ENCODE measurements at regions of chr2 and their contacts with region 1.

Region 1: GRCh38 chr2:227106845-227107759 is 56.9 kb downstream of the COL4A4 start:
- DNase-seq: peak; percentile 46
- ATAC-seq: no peak
- H3K4me3 ChIP-seq: no peak overlapping the region
- H3K4me3 Mint-ChIP-seq: no peak overlapping the region
- H3K27ac ChIP-seq: no peak overlapping the region
- H3K27ac Mint-ChIP-seq: no peak overlapping the region
- H3K4me1 ChIP-seq: no peaks in the 10 kb centered on the region
- H3K4me1 Mint-ChIP-seq: no peaks in the 10 kb centered on the region
- H3K27me3 ChIP-seq: no peaks in the 10 kb centered on the region
- H3K27me3 Mint-ChIP-seq: no peaks in the 10 kb centered on the region
- CTCF ChIP-seq: peak; percentile 65

Region 2: DNA sequence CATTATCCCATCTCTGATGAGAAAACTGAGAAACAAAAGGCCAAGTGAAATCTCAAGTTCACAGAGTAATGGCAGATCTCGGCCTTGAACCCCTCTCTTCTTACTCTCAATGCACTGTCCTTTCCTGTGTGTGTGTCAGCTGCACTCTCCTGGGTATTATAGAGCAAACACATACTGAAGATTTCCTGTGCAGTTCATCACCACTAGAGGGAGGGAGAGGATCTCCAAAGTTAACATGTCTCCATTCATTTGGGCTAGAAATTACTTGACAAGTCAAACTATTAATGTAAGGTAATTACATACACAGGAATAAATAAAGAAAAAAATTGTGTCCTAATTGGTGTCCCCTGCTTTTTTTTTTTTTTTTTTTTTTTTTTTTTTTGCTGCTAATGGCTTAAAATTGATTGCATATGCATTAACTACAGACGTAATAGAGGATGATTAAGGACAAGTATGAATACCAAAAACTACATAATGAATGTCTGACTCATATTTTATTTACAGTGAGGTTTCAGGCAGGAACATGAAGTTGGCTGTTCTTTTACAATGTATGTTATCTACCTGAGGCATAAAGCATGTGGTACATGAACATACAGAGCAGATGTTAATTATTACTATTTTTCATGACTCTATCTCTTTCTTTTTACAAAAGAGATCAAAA is 1438.4 kb before region 1 on chr2:
- CTCF ChIA-PET with region 1: interaction called, 5 read pairs
- POLR2A ChIA-PET with region 1: no interaction called
- intact Hi-C with region 1: loop called (anchors 1 kb)
- DNase-seq: peak; percentile 67
- ATAC-seq: peak; percentile 60
- H3K4me3 ChIP-seq: no peak overlapping the region
- H3K4me3 Mint-ChIP-seq: no peak overlapping the region
- H3K27ac ChIP-seq: no peak overlapping the region
- H3K27ac Mint-ChIP-seq: no peak overlapping the region
- H3K4me1 ChIP-seq: no peaks in the 10 kb centered on the region
- H3K4me1 Mint-ChIP-seq: no peaks in the 10 kb centered on the region
- H3K27me3 ChIP-seq: no peaks in the 10 kb centered on the region
- H3K27me3 Mint-ChIP-seq: peaks cover 3% of the 10 kb centered on the region
- CTCF ChIP-seq: peak; percentile 84

Region 3: DNA sequence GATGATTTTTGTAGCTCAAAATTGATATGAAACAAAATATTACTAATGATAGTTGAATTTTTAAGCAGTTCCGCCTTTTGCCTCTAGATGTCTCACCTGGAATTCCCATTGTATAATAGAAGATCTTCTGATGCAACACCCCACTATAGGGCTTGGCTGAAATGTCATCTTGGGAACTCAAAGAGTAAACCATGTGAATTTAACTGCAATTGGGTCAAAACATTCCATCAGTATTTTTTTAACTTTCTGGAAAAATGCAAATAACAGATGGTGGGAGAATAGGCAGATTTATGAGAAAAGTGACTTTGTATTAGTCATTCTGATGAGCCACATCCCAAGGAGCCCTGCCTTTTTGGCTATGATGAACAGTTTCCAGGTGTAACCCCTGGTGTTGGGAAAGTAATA is 1217.7 kb before region 1 on chr2:
- CTCF ChIA-PET with region 1: no interaction called
- POLR2A ChIA-PET with region 1: no interaction called
- intact Hi-C with region 1: loop called (anchors 2 kb)
- DNase-seq: peak; percentile 40
- ATAC-seq: no peak
- H3K4me3 ChIP-seq: no peak overlapping the region
- H3K4me3 Mint-ChIP-seq: no peak overlapping the region
- H3K27ac ChIP-seq: no peak overlapping the region
- H3K27ac Mint-ChIP-seq: no peak overlapping the region
- H3K4me1 ChIP-seq: no peaks in the 10 kb centered on the region
- H3K4me1 Mint-ChIP-seq: no peaks in the 10 kb centered on the region
- H3K27me3 ChIP-seq: no peaks in the 10 kb centered on the region
- H3K27me3 Mint-ChIP-seq: peaks cover 9% of the 10 kb centered on the region
- CTCF ChIP-seq: peak; percentile 78

Region 4: DNA sequence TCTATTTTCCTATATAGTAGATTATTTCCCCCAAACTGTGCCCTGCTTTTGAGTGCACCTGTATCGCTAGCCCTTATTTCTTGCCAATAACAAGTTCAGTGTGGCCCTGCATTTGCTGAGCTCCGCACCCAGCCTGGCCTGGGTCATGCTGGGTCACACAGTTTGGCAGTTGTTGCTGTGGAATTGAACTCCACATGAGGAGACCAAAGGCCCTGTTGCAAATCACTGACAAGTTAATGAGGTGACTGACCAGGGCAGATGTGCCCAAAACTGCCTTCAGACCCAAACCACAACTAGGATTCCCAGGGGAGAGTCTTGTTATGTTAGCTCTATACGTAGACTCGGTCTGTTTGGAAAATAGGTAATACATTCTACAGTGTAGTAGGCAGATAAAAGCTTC is 25.9 kb after region 1 on chr2:
- CTCF ChIA-PET with region 1: no interaction called
- POLR2A ChIA-PET with region 1: no interaction called
- intact Hi-C with region 1: no loop called
- DNase-seq: no peak
- ATAC-seq: no peak
- H3K4me3 ChIP-seq: no peak overlapping the region
- H3K4me3 Mint-ChIP-seq: no peak overlapping the region
- H3K27ac ChIP-seq: no peak overlapping the region
- H3K27ac Mint-ChIP-seq: no peak overlapping the region
- H3K4me1 ChIP-seq: no peaks in the 10 kb centered on the region
- H3K4me1 Mint-ChIP-seq: no peaks in the 10 kb centered on the region
- H3K27me3 ChIP-seq: no peaks in the 10 kb centered on the region
- H3K27me3 Mint-ChIP-seq: no peaks in the 10 kb centered on the region
- CTCF ChIP-seq: no peak

Region 5: GRCh38 chr2:227423656-227424499 is 316.8 kb after region 1 on chr2:
- CTCF ChIA-PET with region 1: no interaction called
- POLR2A ChIA-PET with region 1: no interaction called
- intact Hi-C with region 1: no loop called
- DNase-seq: no peak
- ATAC-seq: no peak
- H3K4me3 ChIP-seq: no peak overlapping the region
- H3K4me3 Mint-ChIP-seq: no peak overlapping the region
- H3K27ac ChIP-seq: no peak overlapping the region
- H3K27ac Mint-ChIP-seq: no peak overlapping the region
- H3K4me1 ChIP-seq: no peaks in the 10 kb centered on the region
- H3K4me1 Mint-ChIP-seq: no peaks in the 10 kb centered on the region
- H3K27me3 ChIP-seq: no peaks in the 10 kb centered on the region
- H3K27me3 Mint-ChIP-seq: no peaks in the 10 kb centered on the region
- CTCF ChIP-seq: no peak

Region 6: DNA sequence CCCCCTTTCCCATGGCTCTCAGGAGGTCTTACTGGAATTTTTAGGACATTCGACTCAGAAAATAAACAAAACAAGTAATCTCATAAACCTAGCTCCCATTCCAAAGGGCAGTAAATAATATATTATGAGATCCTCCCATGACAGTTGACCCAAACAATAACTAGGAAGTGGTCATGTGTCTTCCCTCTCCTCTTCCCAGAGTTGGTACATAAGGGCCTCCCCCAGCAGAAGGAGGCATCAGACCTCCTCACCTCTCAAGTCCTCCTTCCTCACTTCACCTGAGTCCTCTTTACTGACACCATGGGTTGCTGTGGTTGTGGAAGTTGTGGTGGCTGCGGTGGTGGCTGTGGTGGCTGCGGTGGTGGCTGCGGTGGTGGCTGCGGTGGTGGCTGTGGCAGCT is 620.9 kb after region 1 on chr2 and contains the start of gene SCYGR7:
- CTCF ChIA-PET with region 1: no interaction called
- POLR2A ChIA-PET with region 1: no interaction called
- intact Hi-C with region 1: no loop called
- DNase-seq: no peak
- ATAC-seq: no peak
- H3K4me3 ChIP-seq: no peak within 1 kb of the TSS
- H3K4me3 Mint-ChIP-seq: no peak within 1 kb of the TSS
- H3K27ac ChIP-seq: no peak within 1 kb of the TSS
- H3K27ac Mint-ChIP-seq: no peak within 1 kb of the TSS
- H3K4me1 ChIP-seq: no peaks in the 10 kb centered on the region
- H3K4me1 Mint-ChIP-seq: no peaks in the 10 kb centered on the region
- H3K27me3 ChIP-seq: peaks cover 0 to 7% (median 1%) of the 10 kb centered on the region in 4 experiments
- H3K27me3 Mint-ChIP-seq: peaks cover 17% of the 10 kb centered on the region
- CTCF ChIP-seq: no peak
- total RNA-seq, gene SCYGR7: not detected in 2 replicates

Region 7: DNA sequence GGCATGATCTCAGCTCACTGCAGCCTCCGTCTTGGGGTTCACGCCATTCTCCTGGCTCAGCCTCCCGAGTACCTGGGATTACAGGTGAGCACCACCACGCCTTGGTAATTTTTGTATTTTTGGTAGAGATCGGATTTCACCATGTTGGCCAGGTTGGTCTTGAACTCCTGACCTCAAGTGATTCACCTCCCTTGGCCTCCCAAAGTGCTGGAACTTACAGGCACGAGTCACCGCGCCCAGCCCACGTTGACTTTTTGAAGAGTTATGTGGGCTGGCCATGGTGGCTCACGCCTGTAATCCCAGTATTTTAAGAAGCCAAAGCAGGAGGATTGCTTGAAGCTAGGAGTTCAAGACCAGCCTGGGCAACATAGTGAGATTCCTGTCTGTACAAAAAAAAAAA is 727.3 kb after region 1 on chr2:
- CTCF ChIA-PET with region 1: no interaction called
- POLR2A ChIA-PET with region 1: no interaction called
- intact Hi-C with region 1: no loop called
- DNase-seq: no peak
- ATAC-seq: no peak
- H3K4me3 ChIP-seq: no peak overlapping the region
- H3K4me3 Mint-ChIP-seq: no peak overlapping the region
- H3K27ac ChIP-seq: no peak overlapping the region
- H3K27ac Mint-ChIP-seq: no peak overlapping the region
- H3K4me1 ChIP-seq: no peaks in the 10 kb centered on the region
- H3K4me1 Mint-ChIP-seq: no peaks in the 10 kb centered on the region
- H3K27me3 ChIP-seq: no peaks in the 10 kb centered on the region
- H3K27me3 Mint-ChIP-seq: peaks cover 6% of the 10 kb centered on the region
- CTCF ChIP-seq: no peak

Measured in B cell (primary cell).